ENCODE measurements at regions of chr4 and their contacts with region 1.

Region 1: GRCh38 chr4:97656044-97656720 is 487.1 kb downstream of the STPG2 start:
- DNase-seq: no peak
- ATAC-seq: no peak
- H3K4me3 ChIP-seq: no peak overlapping the region
- H3K27ac ChIP-seq: no peak overlapping the region
- H3K4me1 ChIP-seq: no peaks in the 10 kb centered on the region
- H3K27me3 ChIP-seq: no peaks in the 10 kb centered on the region
- CTCF ChIP-seq: no peak

Region 2: GRCh38 chr4:97643179-97643578 is 13.0 kb before region 1 on chr4:
- CTCF ChIA-PET with region 1: no interaction called
- POLR2A ChIA-PET with region 1: no interaction called
- in situ Hi-C with region 1: no loop called
- intact Hi-C with region 1: loop called (anchors 1 kb)
- DNase-seq: no peak
- ATAC-seq: no peak
- H3K4me3 ChIP-seq: no peak overlapping the region
- H3K27ac ChIP-seq: no peak overlapping the region
- H3K4me1 ChIP-seq: no peaks in the 10 kb centered on the region
- H3K27me3 ChIP-seq: no peaks in the 10 kb centered on the region
- CTCF ChIP-seq: no peak

Measured in Panc1 (cell line).